Endothelial cell of umbilical vein (primary cell): ENCODE measurements at regions of chr3 and their contacts with region 1.

Region 1: DNA sequence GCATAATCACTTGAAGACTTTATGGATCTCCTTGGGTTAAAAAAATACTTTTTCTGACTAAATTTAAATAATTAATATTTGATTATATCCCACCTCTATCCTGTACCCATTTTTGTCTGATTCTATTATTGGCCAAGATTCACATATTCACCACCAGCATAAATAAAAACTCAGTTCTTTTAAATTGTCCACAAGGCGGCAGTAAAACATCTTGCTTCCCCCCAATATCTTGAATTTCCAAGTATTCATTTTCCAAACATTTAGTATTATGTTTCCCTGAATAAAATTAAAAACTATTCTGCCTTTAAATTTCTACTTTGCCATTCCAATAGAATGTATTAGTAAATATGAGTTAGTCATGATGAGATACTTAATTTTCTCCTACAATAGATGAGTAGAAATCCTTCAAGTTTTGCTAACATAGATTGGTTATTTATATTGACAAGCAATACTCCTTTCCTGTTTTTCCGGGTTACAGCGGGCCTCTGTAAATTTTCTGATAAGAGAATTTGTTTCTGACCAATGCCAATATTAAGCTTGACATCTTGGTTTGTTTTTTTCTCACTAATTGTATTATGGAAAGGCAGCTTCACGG is 218.7 kb upstream of the MDFIC2 start:
- DNase-seq: peak; percentile 52
- H3K4me3 ChIP-seq: no peak overlapping the region
- H3K27ac ChIP-seq: no peak overlapping the region
- H3K4me1 ChIP-seq: no peaks in the 10 kb centered on the region
- H3K27me3 ChIP-seq: peaks cover 7 to 9% of the 10 kb centered on the region in 2 experiments
- CTCF ChIP-seq: peak; percentile 7 to 28
- POLR2A ChIP-seq: no peak

Region 2: GRCh38 chr3:70064194-70064779 is 466.9 kb before region 1 on chr3:
- CTCF ChIA-PET with region 1: interaction called, 3 read pairs
- POLR2A ChIA-PET with region 1: no interaction called
- dilution Hi-C with region 1: no loop called
- intact Hi-C with region 1: loop called (anchors 1 kb)
- DNase-seq: peak; percentile 71
- H3K4me3 ChIP-seq: no peak overlapping the region
- H3K27ac ChIP-seq: no peak overlapping the region
- H3K4me1 ChIP-seq: no peaks in the 10 kb centered on the region
- H3K27me3 ChIP-seq: peaks cover 10 to 12% of the 10 kb centered on the region in 2 experiments
- CTCF ChIP-seq: peak; percentile 51 to 52
- POLR2A ChIP-seq: no peak

Region 3: DNA sequence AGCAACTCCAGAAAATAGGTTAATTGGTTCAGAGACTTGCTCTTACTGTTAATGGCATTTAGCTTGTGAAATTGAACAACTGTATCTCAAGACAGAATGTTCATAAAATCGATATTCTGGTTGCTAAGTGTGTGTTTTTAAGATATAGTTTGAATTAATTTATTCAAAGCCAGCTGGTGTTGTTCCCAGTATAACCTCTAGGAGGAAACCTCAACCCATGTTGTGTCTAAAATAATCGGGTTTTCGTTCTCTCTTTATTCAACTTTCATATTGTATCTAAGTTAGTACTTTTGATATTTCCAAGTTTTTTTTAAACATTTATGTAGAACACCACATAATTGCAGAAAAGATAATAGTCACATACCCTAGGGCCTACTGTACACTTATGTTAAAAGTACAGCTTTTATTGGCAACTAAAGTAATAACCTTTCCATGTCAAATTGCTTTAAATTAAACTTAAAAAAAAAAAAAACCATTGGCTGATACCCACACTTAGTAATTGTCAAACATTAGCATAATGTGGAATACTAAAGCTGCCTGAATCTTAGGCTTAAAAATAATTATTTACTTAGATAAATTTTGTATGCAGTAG is 440.7 kb before region 1 on chr3:
- CTCF ChIA-PET with region 1: interaction called, 10 read pairs
- POLR2A ChIA-PET with region 1: no interaction called
- dilution Hi-C with region 1: no loop called
- intact Hi-C with region 1: loop called (anchors 1 kb)
- DNase-seq: peak; percentile 52
- H3K4me3 ChIP-seq: no peak overlapping the region
- H3K27ac ChIP-seq: no peak overlapping the region
- H3K4me1 ChIP-seq: no peaks in the 10 kb centered on the region
- H3K27me3 ChIP-seq: no peaks in the 10 kb centered on the region
- CTCF ChIP-seq: peak; percentile 42 to 52
- POLR2A ChIP-seq: no peak

Region 4: GRCh38 chr3:71305231-71306206 is 774.4 kb after region 1 on chr3:
- CTCF ChIA-PET with region 1: no interaction called
- POLR2A ChIA-PET with region 1: no interaction called
- dilution Hi-C with region 1: no loop called
- intact Hi-C with region 1: loop called (anchors 5 kb)
- DNase-seq: peak; percentile 71
- H3K4me3 ChIP-seq: peak overlapping the region; percentile 24 to 60 (median 41)
- H3K27ac ChIP-seq: peak overlapping the region; percentile 19
- H3K4me1 ChIP-seq: peaks cover 24% of the 10 kb centered on the region
- H3K27me3 ChIP-seq: no peaks in the 10 kb centered on the region
- CTCF ChIP-seq: no peak
- POLR2A ChIP-seq: no peak

Region 5: DNA sequence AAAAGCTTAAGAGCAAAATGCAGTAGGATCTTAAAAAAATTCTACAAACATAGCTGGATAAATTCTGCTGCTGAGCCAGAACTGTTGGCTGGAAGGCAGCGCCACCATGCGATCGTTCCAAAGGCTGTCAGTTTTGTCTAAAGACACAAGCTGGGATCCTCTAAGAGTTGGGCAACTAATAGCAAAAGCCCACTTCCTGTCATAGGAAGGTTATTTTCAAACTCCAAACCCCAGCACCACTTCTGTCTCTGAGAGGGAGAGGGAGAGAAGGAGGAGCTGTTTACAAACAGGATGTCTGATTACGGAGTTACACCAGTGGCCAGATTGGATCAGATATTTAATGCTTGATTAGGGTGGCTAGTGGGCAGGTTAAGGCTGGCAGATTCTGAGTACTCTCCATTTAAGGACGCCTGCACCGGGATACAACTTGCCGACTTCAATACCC is 1150.1 kb after region 1 on chr3:
- CTCF ChIA-PET with region 1: interaction called, 18 read pairs
- POLR2A ChIA-PET with region 1: no interaction called
- dilution Hi-C with region 1: no loop called
- intact Hi-C with region 1: loop called (anchors 1 kb)
- DNase-seq: peak; percentile 73
- H3K4me3 ChIP-seq: no peak overlapping the region
- H3K27ac ChIP-seq: no peak overlapping the region
- H3K4me1 ChIP-seq: peaks cover 5% of the 10 kb centered on the region
- H3K27me3 ChIP-seq: no peaks in the 10 kb centered on the region
- CTCF ChIP-seq: peak; percentile 75 to 80
- POLR2A ChIP-seq: no peak